Activated CD4-positive, alpha-beta T cell treated with anti-CD3 and anti-CD28 coated beads for 36 hours (primary cell): ENCODE measurements at regions of chr9 and their contacts with region 1.

Region 1: DNA sequence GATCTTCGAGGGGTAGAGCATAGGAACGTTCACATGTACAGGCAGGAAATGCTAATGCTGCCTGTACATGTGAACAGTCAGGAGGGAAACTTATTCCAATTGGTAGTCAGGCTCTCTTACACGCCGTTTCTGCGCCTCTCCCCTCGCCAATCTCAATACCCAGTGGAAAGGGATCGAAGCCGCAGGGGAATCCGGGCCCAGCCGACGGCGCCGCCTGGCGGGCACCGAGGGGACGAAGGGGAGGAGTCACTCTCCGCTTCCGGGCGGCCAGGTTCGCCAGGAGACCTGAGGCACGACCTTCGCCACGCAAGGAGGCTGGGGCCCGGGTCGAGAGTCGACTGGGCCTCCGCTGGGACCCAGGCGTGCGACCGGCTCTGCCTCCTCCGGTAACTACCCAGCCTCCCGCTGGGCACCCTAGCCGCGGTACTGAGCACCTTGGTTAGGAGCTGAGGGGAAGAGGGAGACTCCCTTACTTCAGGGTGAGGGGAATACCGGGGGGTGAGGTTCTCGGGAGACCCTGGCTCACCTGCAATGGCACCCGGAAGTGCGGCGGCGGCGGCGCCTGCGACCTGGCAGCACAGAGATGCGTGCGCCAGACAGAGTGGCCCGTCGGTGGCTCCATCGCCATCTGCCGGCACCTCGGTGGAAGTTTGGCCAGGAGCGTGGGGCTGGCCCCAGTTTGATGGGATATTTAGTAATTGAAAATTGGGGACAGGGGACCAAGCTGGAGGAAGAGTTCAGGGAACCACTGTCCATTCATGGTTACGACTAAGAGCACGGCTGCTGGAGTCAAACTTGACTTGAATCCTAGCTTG is at the start of gene PIGO:
- DNase-seq: peak; percentile 95
- ATAC-seq: peak; percentile 91
- H3K4me3 Mint-ChIP-seq: peak within 1 kb of the TSS; percentile 85
- H3K27ac Mint-ChIP-seq: peak within 1 kb of the TSS; percentile 92
- H3K4me1 Mint-ChIP-seq: peaks cover 25% of the 10 kb centered on the region
- H3K27me3 Mint-ChIP-seq: no peaks in the 10 kb centered on the region
- total RNA-seq, gene PIGO: 21.0 to 27.2 TPM

Region 2: DNA sequence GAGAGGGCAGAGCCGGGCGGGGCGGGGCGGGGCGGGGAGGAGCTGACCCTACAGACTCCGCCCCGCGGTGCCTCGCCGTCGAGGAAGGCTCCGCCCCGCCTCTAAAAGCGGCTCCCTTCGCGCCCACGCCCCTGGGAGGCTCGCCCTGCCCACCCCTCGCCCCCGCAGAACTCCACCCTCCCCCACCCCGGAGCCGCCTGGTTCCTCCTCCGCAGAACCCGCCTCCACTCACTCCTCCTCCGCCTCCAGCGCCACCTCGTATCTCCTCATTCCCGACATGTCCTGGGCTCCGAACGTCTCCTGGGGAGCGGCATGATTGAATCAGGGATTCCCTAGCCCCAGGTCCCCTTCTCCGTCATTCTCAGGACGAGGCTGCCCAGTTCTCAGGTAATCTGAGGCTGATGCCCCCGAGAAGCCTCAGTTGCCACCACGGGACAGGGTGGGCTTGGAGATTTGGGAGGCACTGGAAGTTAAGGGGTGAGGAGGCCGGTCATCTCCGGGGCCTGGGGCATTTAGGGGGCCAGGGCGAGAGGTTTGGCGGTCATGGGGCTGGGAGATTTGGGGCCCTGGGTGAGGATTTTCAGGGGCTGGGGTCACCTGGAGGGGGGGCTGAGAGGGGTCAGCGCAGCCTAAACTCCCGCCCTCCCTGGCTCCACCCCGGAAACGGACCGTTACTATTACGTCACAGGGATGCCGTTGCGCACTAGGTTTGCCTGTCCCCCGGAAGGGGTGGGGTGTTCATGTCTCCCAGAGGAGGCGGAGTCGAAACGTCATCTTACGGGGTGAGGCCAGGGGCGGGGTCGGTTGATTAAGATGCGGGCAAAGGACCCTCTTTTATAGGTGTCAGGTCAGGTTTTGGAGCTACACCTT is 430.6 kb before region 1 on chr9:
- CTCF ChIA-PET with region 1: interaction called, 4 read pairs
- POLR2A ChIA-PET with region 1: no interaction called
- intact Hi-C with region 1: loop called in 1 of 2 experiments (anchors 2 kb)
- DNase-seq: peak; percentile 93
- ATAC-seq: peak; percentile 75
- H3K4me3 Mint-ChIP-seq: peak overlapping the region; percentile 77
- H3K27ac Mint-ChIP-seq: peak overlapping the region; percentile 87
- H3K4me1 Mint-ChIP-seq: peaks cover 33% of the 10 kb centered on the region
- H3K27me3 Mint-ChIP-seq: no peaks in the 10 kb centered on the region

Region 3: DNA sequence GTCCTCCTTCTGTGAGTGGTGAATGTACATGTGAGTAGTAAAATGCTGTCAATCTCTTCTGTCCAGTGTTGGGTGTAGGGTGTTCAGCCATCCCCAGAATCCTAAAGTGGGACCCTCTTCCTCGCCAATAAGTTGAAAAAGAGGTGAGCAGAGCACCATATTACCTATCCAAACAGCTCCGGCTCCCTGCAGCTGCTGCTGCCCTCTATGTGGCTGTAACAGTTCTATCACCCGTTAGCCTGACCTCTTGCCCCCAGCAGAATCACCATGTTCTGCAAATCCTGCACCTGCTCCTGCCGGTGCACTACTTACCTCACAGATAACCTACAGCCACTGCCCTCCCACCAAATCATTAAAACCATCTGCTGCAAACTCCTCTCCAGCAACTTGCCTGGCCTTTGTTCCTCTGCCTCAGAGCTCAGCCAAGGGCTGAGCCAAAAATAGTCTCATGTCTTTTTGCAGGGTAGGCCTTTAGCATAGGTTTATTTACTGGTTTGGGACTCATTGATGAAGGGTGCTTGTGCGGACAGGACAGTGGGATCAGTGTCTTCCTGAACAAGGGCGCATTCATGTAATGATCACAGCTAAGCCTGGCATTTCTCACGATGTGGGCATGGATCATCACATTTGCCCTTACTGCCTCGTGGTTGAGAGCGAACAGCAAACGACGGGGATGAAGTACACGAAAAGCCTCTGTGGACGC is 336.7 kb before region 1 on chr9:
- CTCF ChIA-PET with region 1: no interaction called
- POLR2A ChIA-PET with region 1: no interaction called
- intact Hi-C with region 1: loop called in 1 of 2 experiments (anchors 1 kb)
- DNase-seq: no peak
- ATAC-seq: no peak
- H3K4me3 Mint-ChIP-seq: no peak overlapping the region
- H3K27ac Mint-ChIP-seq: no peak overlapping the region
- H3K4me1 Mint-ChIP-seq: peaks cover 2% of the 10 kb centered on the region
- H3K27me3 Mint-ChIP-seq: peaks cover 22% of the 10 kb centered on the region

Region 4: GRCh38 chr9:34984049-34984448 is 112.2 kb before region 1 on chr9:
- CTCF ChIA-PET with region 1: no interaction called
- POLR2A ChIA-PET with region 1: no interaction called
- intact Hi-C with region 1: loop called in 1 of 2 experiments (anchors 1 kb)
- DNase-seq: peak; percentile 61
- ATAC-seq: no peak
- H3K4me3 Mint-ChIP-seq: no peak overlapping the region
- H3K27ac Mint-ChIP-seq: no peak overlapping the region
- H3K4me1 Mint-ChIP-seq: peaks cover 66% of the 10 kb centered on the region
- H3K27me3 Mint-ChIP-seq: no peaks in the 10 kb centered on the region

Region 5: GRCh38 chr9:35056571-35057270 is 39.5 kb before region 1 on chr9:
- CTCF ChIA-PET with region 1: interaction called, 8 read pairs
- POLR2A ChIA-PET with region 1: no interaction called
- intact Hi-C with region 1: loop called in 1 of 2 experiments (anchors 2 kb)
- DNase-seq: no peak
- ATAC-seq: no peak
- H3K4me3 Mint-ChIP-seq: no peak overlapping the region
- H3K27ac Mint-ChIP-seq: no peak overlapping the region
- H3K4me1 Mint-ChIP-seq: no peaks in the 10 kb centered on the region
- H3K27me3 Mint-ChIP-seq: no peaks in the 10 kb centered on the region

Region 6: DNA sequence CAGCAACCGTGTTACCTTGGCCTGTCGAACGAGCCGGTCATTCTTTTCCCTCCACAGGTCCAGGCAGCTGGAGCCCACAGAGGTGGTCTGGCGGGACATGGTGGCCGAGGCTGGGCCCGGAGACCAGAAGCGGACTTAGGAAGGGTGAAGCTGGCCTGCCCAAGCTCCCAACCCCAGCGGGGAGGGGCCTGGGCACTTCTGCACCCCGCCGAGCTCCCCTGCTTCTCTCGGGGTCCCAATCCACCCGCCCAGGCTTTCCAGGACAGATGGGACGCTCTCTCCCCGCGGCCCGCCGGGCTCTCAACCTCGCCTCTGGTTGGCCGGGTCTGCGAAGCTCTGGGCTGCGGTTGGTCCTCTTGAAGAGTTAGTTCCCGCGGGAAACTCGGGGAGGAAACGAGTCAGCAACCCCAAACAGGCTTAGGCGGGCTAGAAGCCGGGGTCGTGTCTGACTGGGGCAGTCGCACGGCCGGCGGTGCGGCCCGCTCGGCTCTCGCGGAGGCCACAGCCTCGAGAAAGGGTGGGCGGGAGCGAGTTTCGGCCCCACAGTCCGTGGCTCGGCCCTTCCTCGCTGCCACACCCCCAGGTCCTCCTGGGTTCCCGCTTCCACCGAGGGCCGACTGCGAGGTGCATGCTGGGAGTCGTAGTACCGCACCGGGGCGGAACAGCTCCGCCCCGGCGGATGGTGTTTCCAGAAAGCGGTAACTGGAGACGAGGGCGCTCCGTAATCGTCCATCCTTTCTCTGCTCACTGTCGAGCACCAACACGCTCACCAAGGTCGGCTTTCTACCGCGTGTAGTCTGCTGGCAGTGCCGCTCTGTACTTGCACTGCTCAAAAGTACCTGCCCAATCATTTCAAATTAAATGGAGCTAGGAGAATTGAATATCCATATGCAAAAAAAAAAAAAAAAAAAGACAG is 16.6 kb before region 1 on chr9 and contains the start of gene FANCG:
- CTCF ChIA-PET with region 1: interaction called, 54 read pairs
- POLR2A ChIA-PET with region 1: interaction called, 11 read pairs
- intact Hi-C with region 1: loop called (anchors 1 kb)
- DNase-seq: peak; percentile 93
- ATAC-seq: peak; percentile 94
- H3K4me3 Mint-ChIP-seq: peak within 1 kb of the TSS; percentile 81
- H3K27ac Mint-ChIP-seq: peak within 1 kb of the TSS; percentile 96
- H3K4me1 Mint-ChIP-seq: peaks cover 16% of the 10 kb centered on the region
- H3K27me3 Mint-ChIP-seq: no peaks in the 10 kb centered on the region
- total RNA-seq, gene FANCG: 92.8 to 93.4 TPM

Region 7: GRCh38 chr9:35111001-35111933 is 15.0 kb after region 1 on chr9:
- CTCF ChIA-PET with region 1: interaction called, 7 read pairs
- POLR2A ChIA-PET with region 1: no interaction called
- intact Hi-C with region 1: loop called (anchors 1 to 2 kb)
- DNase-seq: peak; percentile 98
- ATAC-seq: peak; percentile 82
- H3K4me3 Mint-ChIP-seq: peak overlapping the region; percentile 63
- H3K27ac Mint-ChIP-seq: peak overlapping the region; percentile 90
- H3K4me1 Mint-ChIP-seq: peaks cover 48% of the 10 kb centered on the region
- H3K27me3 Mint-ChIP-seq: no peaks in the 10 kb centered on the region